H1 (cell line): ENCODE measurements at regions of chr1 and their contacts with region 1.

Region 1: GRCh38 chr1:55021965-55022546 is 17.3 kb upstream of the PCSK9 start:
- DNase-seq: peak; percentile 95 to 98
- H3K4me3 ChIP-seq: no peak overlapping the region
- H3K27ac ChIP-seq: no peak overlapping the region
- H3K4me1 ChIP-seq: no peaks in the 10 kb centered on the region; a peak in 2 of 7 replicates
- H3K27me3 ChIP-seq: no peaks in the 10 kb centered on the region
- CTCF ChIP-seq: peak; percentile 83 to 99 (median 98)
- EP300 ChIP-seq: no peak
- POLR2A ChIP-seq: peak in 1 of 2 experiments; percentile 32; a peak in 1 of 3 replicates
- RAD21 ChIP-seq: peak; percentile 93

Region 2: GRCh38 chr1:54581621-54582035 is 440.4 kb before region 1 on chr1:
- CTCF ChIA-PET with region 1: no interaction called
- POLR2A ChIA-PET with region 1: no interaction called
- DNase-seq: no peak
- H3K4me3 ChIP-seq: no peak overlapping the region
- H3K27ac ChIP-seq: 0 out of 2 replicates have a peak overlapping the region, but pooled peaks have one; percentile 73
- H3K4me1 ChIP-seq: peaks cover 19 to 21% (median 20%) of the 10 kb centered on the region in 4 experiments
- H3K27me3 ChIP-seq: no peaks in the 10 kb centered on the region
- CTCF ChIP-seq: no peak
- EP300 ChIP-seq: no peak
- POLR2A ChIP-seq: no peak
- RAD21 ChIP-seq: no peak

Region 3: DNA sequence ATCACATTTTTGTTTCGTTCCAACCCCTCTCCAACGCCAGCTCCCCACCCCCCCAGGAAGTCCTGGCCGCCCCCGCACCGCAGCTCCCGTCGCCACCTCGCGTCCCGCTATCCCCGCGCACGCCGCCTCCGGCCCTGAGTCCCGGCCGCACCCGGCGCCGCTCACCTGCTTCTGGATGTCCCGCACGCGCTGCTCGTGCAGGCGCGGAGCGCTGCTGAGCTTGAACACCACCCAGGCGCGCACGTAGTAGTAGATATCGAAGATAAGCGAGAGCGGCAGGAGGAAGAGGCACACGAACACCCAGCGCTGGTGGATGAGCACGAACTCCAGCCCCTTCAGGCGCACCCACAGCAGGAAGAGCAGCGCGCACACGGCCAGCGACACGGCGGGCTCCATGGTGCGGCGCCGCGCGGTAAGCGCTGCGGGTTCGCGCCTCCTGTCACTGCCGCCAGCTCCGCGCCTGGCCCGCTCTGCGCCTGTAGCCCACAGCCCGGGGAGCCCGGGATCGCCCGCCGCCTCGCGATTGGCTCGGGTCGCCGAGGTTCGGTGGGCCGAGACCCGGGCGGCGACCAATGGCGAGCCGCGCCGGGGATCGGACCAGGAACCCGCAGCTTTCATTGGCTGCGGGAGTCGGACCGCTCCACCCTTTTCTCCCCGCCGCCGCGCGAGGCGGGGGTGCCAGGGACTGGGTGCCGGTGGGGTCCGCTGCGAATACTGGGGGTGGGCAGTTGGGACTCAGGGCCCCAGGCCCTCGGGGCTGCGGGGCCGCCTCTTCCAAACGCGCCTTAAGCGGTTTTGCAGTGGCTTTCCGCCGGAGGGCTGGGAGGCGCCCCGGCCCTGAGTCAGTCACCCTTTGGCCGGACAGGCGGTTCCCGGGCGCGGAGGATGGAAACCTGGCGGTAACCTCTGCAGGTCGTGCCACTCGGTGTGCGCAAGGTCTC is 135.1 kb before region 1 on chr1 and contains the start of gene DHCR24:
- CTCF ChIA-PET with region 1: interaction called, 14 read pairs
- POLR2A ChIA-PET with region 1: no interaction called
- DNase-seq: peak; percentile 49 to 90
- H3K4me3 ChIP-seq: peak within 1 kb of the TSS; percentile 77 to 99 (median 84)
- H3K27ac ChIP-seq: peak within 1 kb of the TSS; percentile 47; the same call in 1 of the 2 replicates
- H3K4me1 ChIP-seq: peaks cover 13 to 22% (median 19%) of the 10 kb centered on the region in 4 experiments
- H3K27me3 ChIP-seq: no peaks in the 10 kb centered on the region
- CTCF ChIP-seq: no peak
- EP300 ChIP-seq: no peak
- POLR2A ChIP-seq: peak in 1 of 2 experiments; percentile 65; a peak in 1 of 3 replicates
- RAD21 ChIP-seq: no peak
- total RNA-seq, gene DHCR24: 419 and 455 TPM in 2 replicates

Region 4: DNA sequence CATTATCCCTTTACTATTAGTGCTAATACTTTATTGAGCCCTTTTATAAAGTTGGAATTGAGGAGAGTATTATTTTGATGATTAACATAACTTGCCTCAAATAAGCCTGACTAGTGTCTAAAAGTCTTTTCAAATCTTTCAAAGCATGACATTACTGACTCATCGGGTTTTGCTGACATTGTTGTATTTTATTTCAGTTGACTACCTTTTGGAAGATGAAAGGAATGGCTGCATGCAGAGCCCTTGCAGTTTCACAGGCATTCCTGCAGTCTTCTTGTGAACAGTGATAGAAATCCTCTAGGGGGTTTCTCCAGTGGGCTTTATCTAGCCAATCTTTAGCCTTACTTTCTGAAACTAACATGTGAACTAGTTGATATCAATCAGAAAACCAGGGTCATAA is 84.6 kb before region 1 on chr1:
- CTCF ChIA-PET with region 1: interaction called, 343 read pairs
- POLR2A ChIA-PET with region 1: no interaction called
- DNase-seq: no peak
- H3K4me3 ChIP-seq: no peak overlapping the region
- H3K27ac ChIP-seq: no peak overlapping the region
- H3K4me1 ChIP-seq: peaks cover 0 to 4% (median 2%) of the 10 kb centered on the region in 4 experiments; a peak in 3 of 7 replicates
- H3K27me3 ChIP-seq: no peaks in the 10 kb centered on the region
- CTCF ChIP-seq: no peak
- EP300 ChIP-seq: no peak
- POLR2A ChIP-seq: no peak
- RAD21 ChIP-seq: no peak

Region 5: DNA sequence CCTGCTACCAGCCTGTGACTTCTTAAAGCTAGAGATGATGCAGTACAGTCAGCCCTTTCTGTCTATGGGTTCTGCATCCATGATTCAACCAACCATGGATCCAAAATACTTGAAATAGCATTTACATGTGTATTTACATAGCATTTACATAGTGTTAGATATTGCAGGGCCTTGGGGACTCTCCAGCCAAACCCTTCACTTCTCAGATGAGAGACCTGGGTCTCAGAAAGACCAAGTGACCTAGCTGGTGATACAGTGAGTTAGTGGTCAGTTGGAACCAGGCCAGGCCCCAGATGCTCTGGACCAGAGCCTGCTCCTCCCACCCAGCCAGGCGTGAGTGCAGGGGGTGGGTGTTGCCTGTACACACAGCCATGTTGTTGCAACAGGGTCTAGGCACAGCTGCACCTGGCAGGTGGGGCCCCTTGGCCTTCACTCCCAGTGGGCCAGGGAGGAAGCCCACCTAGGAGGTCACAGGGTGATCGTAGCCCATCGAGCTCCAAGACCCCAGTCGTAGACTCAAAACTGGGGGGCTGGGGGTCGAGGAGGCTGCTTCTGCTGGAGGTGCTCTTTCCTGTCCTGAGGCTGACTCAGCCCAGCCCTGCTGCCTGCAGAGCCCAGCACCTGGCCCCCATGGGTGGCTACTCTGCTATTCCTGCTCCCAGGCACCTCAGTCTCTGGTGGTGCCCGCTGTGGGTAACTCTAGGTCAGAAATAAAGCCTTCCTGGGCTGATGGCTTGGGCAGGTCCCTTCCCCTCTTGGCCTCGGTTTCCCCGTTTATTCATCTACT is 33.9 kb before region 1 on chr1:
- CTCF ChIA-PET with region 1: interaction called, 14 read pairs
- POLR2A ChIA-PET with region 1: no interaction called
- DNase-seq: no peak
- H3K4me3 ChIP-seq: no peak overlapping the region
- H3K27ac ChIP-seq: no peak overlapping the region
- H3K4me1 ChIP-seq: peaks cover 0 to 4% (median 3%) of the 10 kb centered on the region in 4 experiments; a peak in 3 of 7 replicates
- H3K27me3 ChIP-seq: no peaks in the 10 kb centered on the region; a peak in 1 of 7 replicates
- CTCF ChIP-seq: no peak
- EP300 ChIP-seq: no peak
- POLR2A ChIP-seq: no peak
- RAD21 ChIP-seq: no peak

Region 6: GRCh38 chr1:54996359-54996868 is 25.6 kb before region 1 on chr1:
- CTCF ChIA-PET with region 1: interaction called, 68 read pairs
- POLR2A ChIA-PET with region 1: no interaction called
- DNase-seq: peak; percentile 61 to 96
- H3K4me3 ChIP-seq: peak overlapping the region; percentile 12 to 65 (median 50); a peak in 7 of 8 replicates
- H3K27ac ChIP-seq: no peak overlapping the region
- H3K4me1 ChIP-seq: peaks cover 16 to 30% (median 23%) of the 10 kb centered on the region in 4 experiments
- H3K27me3 ChIP-seq: peaks cover 4 to 45% (median 38%) of the 10 kb centered on the region in 4 experiments
- CTCF ChIP-seq: peak; percentile 78 to 95 (median 82)
- EP300 ChIP-seq: no peak
- POLR2A ChIP-seq: no peak
- RAD21 ChIP-seq: peak; percentile 95 to 98

Region 7: GRCh38 chr1:55007625-55008024 is 14.4 kb before region 1 on chr1:
- CTCF ChIA-PET with region 1: interaction called, 62 read pairs
- POLR2A ChIA-PET with region 1: no interaction called
- DNase-seq: no peak
- H3K4me3 ChIP-seq: no peak overlapping the region
- H3K27ac ChIP-seq: no peak overlapping the region
- H3K4me1 ChIP-seq: peaks cover 0 to 12% (median 3%) of the 10 kb centered on the region in 4 experiments; a peak in 4 of 7 replicates
- H3K27me3 ChIP-seq: peaks cover 0 to 5% (median 0%) of the 10 kb centered on the region in 4 experiments; a peak in 3 of 7 replicates
- CTCF ChIP-seq: no peak
- EP300 ChIP-seq: no peak
- POLR2A ChIP-seq: no peak
- RAD21 ChIP-seq: no peak

Region 8: DNA sequence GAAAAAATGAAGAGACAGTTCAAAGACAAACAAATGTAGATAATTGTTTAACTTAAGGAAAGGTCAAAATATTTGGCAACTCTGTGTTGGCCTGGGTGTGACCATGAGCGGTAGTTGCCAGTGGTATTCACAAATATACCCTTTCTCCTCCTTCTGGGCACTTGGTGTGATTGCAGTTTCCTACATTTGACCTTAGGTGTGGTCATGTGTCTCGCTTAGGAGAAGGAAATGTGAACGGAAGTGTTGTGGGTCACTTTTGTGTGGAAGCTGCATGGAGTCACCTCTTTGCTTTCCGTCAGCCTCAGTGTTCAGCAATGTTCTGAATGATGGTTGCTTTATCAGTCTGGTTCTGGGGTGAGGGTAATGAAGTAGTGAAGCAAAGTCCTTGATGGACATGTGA is 13.8 kb after region 1 on chr1:
- CTCF ChIA-PET with region 1: interaction called, 33 read pairs
- POLR2A ChIA-PET with region 1: interaction called, 4 read pairs
- DNase-seq: no peak
- H3K4me3 ChIP-seq: no peak overlapping the region
- H3K27ac ChIP-seq: no peak overlapping the region
- H3K4me1 ChIP-seq: peaks cover 0 to 13% (median 8%) of the 10 kb centered on the region in 4 experiments; a peak in 6 of 7 replicates
- H3K27me3 ChIP-seq: peaks cover 9 to 34% (median 33%) of the 10 kb centered on the region in 4 experiments
- CTCF ChIP-seq: peak in 2 of 3 experiments; percentile 29 to 36; a peak in 3 of 4 replicates
- EP300 ChIP-seq: no peak
- POLR2A ChIP-seq: no peak
- RAD21 ChIP-seq: peak; percentile 15 to 32; a peak in 2 of 4 replicates

Region 9: DNA sequence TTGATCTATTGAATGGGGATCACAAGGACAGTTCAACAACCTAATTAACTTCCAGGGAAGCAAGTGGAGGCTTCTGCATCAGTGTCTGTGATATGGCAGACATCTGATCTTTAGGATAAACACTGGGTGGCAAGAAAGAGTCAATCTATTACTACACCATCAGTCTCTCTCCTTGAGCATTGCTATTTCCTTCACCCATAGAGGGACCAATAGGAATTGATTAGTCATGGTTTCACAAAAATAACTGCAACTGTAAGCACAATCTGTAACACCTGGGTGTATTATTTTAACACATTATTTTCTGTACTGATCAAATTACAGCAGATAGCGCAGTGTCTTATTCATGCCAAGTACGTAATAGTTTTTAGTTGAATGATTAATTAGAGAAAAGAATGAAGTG is 142.8 kb after region 1 on chr1:
- CTCF ChIA-PET with region 1: no interaction called
- POLR2A ChIA-PET with region 1: no interaction called
- DNase-seq: no peak
- H3K4me3 ChIP-seq: no peak overlapping the region
- H3K27ac ChIP-seq: no peak overlapping the region
- H3K4me1 ChIP-seq: peaks cover 0 to 4% (median 0%) of the 10 kb centered on the region in 4 experiments; a peak in 2 of 7 replicates
- H3K27me3 ChIP-seq: no peaks in the 10 kb centered on the region
- CTCF ChIP-seq: no peak
- EP300 ChIP-seq: no peak
- POLR2A ChIP-seq: no peak
- RAD21 ChIP-seq: no peak

Region 10: DNA sequence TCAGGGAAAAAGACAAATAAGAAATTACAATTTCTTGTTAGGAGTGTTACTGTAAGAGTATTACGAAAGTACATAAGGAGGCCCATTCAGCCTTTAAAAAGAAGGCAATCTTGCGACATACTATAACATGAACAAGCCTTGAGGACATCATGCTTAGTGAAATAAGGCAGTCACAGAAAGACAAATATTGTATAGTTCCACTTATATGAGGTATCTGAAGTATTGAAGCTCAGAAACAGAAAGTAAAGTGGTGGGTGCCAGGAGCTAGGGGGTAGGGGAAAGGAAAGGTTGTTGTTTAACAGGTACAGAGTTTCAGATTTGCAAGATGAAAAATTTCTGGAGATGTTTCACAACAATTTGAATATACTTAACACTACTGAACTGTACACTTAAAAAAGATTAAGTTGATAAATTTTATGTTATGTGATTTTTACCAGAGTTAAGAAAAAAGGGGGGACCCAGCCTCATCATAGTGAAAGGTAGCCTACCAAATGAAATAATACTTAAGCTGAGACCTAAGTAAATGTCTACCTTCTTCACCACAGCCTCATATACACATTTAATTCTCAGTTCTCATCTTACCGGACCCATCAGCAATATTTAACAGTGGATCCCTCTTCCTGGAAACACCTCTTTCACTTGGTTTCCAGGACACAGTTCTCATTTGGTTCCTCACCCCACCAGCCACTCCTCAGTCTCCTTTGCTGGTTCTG is 173.6 kb after region 1 on chr1:
- CTCF ChIA-PET with region 1: no interaction called
- POLR2A ChIA-PET with region 1: no interaction called
- DNase-seq: no peak
- H3K4me3 ChIP-seq: no peak overlapping the region
- H3K27ac ChIP-seq: no peak overlapping the region
- H3K4me1 ChIP-seq: no peaks in the 10 kb centered on the region; a peak in 2 of 7 replicates
- H3K27me3 ChIP-seq: peaks cover 0 to 1% (median 0%) of the 10 kb centered on the region in 4 experiments; a peak in 1 of 7 replicates
- CTCF ChIP-seq: no peak
- EP300 ChIP-seq: no peak
- POLR2A ChIP-seq: no peak
- RAD21 ChIP-seq: no peak